CD4-positive, alpha-beta T cell (primary cell): ENCODE measurements at regions of chr7 and their contacts with region 1.

Region 1: GRCh38 chr7:130896898-130897514 is 163.0 kb upstream of the KLF14 start:
- DNase-seq: peak; percentile 51 to 91 (median 68)
- ATAC-seq: peak; percentile 81
- H3K4me3 ChIP-seq: no peak overlapping the region
- H3K4me3 Mint-ChIP-seq: peak overlapping the region; percentile 79
- H3K27ac ChIP-seq: no peak overlapping the region
- H3K27ac Mint-ChIP-seq: peak overlapping the region; percentile 74
- H3K4me1 ChIP-seq: peaks cover 76% of the 10 kb centered on the region
- H3K4me1 Mint-ChIP-seq: peaks cover 81% of the 10 kb centered on the region
- H3K27me3 ChIP-seq: no peaks in the 10 kb centered on the region
- H3K27me3 Mint-ChIP-seq: no peaks in the 10 kb centered on the region
- CTCF ChIP-seq: peak; percentile 77

Region 2: GRCh38 chr7:130781346-130781745 is 115.7 kb before region 1 on chr7:
- CTCF ChIA-PET with region 1: no interaction called
- POLR2A ChIA-PET with region 1: no interaction called
- intact Hi-C with region 1: no loop called
- DNase-seq: no peak
- ATAC-seq: no peak
- H3K4me3 ChIP-seq: no peak overlapping the region
- H3K4me3 Mint-ChIP-seq: no peak overlapping the region
- H3K27ac ChIP-seq: no peak overlapping the region
- H3K27ac Mint-ChIP-seq: no peak overlapping the region
- H3K4me1 ChIP-seq: no peaks in the 10 kb centered on the region
- H3K4me1 Mint-ChIP-seq: no peaks in the 10 kb centered on the region
- H3K27me3 ChIP-seq: no peaks in the 10 kb centered on the region
- H3K27me3 Mint-ChIP-seq: peaks cover 63% of the 10 kb centered on the region
- CTCF ChIP-seq: no peak

Region 3: GRCh38 chr7:130881091-130881798 is 15.8 kb before region 1 on chr7:
- CTCF ChIA-PET with region 1: interaction called, 11 read pairs
- POLR2A ChIA-PET with region 1: no interaction called
- intact Hi-C with region 1: no loop called
- DNase-seq: no peak
- ATAC-seq: no peak
- H3K4me3 ChIP-seq: no peak overlapping the region
- H3K4me3 Mint-ChIP-seq: no peak overlapping the region
- H3K27ac ChIP-seq: no peak overlapping the region
- H3K27ac Mint-ChIP-seq: peak overlapping the region; percentile 8
- H3K4me1 ChIP-seq: no peaks in the 10 kb centered on the region
- H3K4me1 Mint-ChIP-seq: peaks cover 31% of the 10 kb centered on the region
- H3K27me3 ChIP-seq: no peaks in the 10 kb centered on the region
- H3K27me3 Mint-ChIP-seq: no peaks in the 10 kb centered on the region
- CTCF ChIP-seq: no peak

Region 4: DNA sequence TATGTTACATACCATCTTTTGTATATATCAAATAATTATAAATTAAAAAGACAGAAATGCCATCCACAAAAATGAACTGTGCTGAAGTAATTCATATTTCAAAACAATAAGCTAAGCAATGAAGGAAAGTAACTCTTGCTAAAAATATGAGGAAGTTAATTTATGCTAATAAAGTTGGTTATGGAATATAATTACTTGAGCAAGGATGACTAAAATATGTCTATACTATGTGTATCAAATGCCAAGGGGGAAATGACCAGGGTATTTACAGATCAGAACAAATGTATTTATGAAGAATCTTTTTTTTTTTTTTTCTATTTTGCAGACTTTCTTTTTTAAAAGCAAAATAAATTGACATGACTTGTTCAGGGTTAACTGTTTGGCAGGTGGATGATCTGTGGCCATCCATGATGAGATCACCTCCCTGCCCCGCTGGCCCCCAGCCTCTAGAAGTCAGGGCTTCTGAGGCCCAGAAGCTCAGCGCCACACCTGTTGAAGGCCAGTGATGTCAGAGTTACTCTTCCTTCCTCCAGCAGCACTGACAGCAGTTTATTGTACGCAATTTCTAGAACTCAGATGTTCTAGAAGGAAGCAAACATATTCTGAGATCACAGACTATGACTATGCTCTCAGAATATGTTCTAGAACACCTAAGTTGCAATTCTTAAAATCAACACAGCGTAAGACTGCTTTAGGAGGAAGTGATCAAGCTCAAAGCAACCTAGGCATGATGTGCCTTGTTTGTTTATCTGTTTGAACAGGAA is 33.1 kb after region 1 on chr7:
- CTCF ChIA-PET with region 1: interaction called, 11 read pairs
- POLR2A ChIA-PET with region 1: interaction called, 3 read pairs
- intact Hi-C with region 1: no loop called
- DNase-seq: peak in 6 of 14 experiments; percentile 32 to 81 (median 59)
- ATAC-seq: peak; percentile 66
- H3K4me3 ChIP-seq: no peak overlapping the region
- H3K4me3 Mint-ChIP-seq: peak overlapping the region; percentile 67
- H3K27ac ChIP-seq: peak overlapping the region; percentile 46 to 65
- H3K27ac Mint-ChIP-seq: peak overlapping the region; percentile 80
- H3K4me1 ChIP-seq: peaks cover 70% of the 10 kb centered on the region
- H3K4me1 Mint-ChIP-seq: peaks cover 96% of the 10 kb centered on the region
- H3K27me3 ChIP-seq: no peaks in the 10 kb centered on the region
- H3K27me3 Mint-ChIP-seq: no peaks in the 10 kb centered on the region
- CTCF ChIP-seq: no peak

Region 5: DNA sequence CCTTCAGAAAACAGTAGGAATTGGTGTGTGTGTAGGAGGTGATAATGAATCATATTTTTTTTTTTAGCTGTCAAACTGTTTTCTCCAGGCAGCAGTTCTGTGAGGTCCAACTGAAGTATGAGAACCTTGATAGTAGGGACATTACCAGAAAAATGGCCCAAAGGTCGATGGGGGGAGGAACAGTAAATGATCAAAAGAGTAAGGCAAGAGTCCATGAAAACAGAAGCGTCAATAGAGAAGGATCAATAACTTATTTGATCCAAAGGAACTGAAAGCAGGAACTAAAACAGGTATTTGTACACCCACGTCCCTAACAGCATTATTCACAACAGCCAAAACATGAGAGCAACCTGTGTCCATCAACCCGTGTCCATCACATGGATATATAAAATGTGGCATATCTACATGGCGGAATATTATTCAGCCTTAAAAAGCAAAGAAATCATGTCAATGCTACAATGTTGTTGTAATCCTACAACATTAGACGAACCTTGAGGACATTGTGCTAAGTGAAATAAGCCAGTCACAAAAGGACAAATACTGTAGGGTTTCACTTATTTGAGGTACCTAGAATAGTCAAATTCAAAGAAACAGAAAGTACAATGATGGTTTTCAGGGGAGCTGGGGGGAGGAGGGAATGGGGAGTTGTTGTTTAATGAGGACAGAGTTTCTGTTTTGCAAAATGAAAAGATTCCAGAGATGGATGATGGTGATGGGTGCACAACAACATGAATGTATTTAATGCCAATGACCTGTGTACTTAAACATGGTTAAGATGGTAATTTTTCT is 51.0 kb after region 1 on chr7:
- CTCF ChIA-PET with region 1: interaction called, 10 read pairs
- POLR2A ChIA-PET with region 1: interaction called, 4 read pairs
- intact Hi-C with region 1: loop called in 1 of 2 experiments (anchors 10 kb)
- DNase-seq: peak in 3 of 14 experiments; percentile 62 to 84 (median 64)
- ATAC-seq: peak; percentile 16
- H3K4me3 ChIP-seq: peak overlapping the region; percentile 19
- H3K4me3 Mint-ChIP-seq: peak overlapping the region; percentile 74
- H3K27ac ChIP-seq: peak overlapping the region in 1 of 2 donors; percentile 68
- H3K27ac Mint-ChIP-seq: peak overlapping the region; percentile 98
- H3K4me1 ChIP-seq: peaks cover 59% of the 10 kb centered on the region
- H3K4me1 Mint-ChIP-seq: peaks cover 54% of the 10 kb centered on the region
- H3K27me3 ChIP-seq: no peaks in the 10 kb centered on the region
- H3K27me3 Mint-ChIP-seq: no peaks in the 10 kb centered on the region
- CTCF ChIP-seq: no peak

Region 6: DNA sequence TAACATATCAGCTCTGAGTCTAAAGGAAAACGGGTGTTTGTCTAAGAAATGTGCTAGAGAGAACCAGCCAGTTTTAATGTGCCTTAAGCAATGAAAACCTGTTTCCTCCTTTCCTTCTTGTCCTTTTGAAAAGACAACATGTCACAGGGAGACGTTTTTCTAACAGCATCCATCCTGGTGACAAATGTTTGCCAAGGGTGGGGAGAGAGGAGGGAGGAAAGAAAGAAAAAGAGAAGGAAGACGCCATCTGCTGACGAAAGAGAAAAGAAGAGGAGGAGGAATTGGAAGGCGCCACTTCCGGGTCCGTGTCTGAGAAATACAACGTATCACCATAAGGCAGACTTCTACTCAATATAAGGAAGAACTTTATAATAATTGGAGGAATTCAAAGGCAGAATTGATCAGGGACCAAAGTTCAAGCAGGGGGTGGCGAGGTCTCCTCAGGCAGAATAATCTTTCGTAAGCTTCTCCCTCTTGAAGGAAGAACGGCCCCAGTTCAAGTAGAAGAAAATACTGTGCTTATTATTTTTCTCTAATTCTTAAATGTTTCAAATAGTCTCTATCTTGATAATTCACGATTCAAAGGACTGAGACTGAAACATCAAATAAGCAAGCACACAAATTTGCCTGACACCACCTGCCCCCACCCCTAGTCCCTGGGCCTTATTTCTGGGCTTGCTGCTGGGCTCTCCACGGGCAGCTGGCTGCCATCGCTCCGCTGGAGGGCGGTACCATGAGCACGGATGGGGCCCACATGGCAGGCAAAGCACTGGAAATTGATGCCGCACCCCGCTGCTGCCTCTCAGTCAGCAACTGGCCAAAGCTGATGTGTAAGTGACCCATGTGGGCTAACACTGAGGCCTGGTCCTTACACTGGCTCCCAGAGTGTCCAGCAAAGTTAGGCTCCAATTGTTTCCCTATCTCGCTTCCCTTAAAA is 110.7 kb after region 1 on chr7:
- CTCF ChIA-PET with region 1: interaction called, 6 read pairs
- POLR2A ChIA-PET with region 1: interaction called, 13 read pairs
- intact Hi-C with region 1: loop called (anchors 1 kb)
- DNase-seq: peak in 11 of 14 experiments; percentile 27 to 83 (median 48)
- ATAC-seq: peak; percentile 60
- H3K4me3 ChIP-seq: no peak overlapping the region
- H3K4me3 Mint-ChIP-seq: peak overlapping the region; percentile 40
- H3K27ac ChIP-seq: peak overlapping the region; percentile 36 to 71
- H3K27ac Mint-ChIP-seq: peak overlapping the region; percentile 76
- H3K4me1 ChIP-seq: peaks cover 61% of the 10 kb centered on the region
- H3K4me1 Mint-ChIP-seq: peaks cover 93% of the 10 kb centered on the region
- H3K27me3 ChIP-seq: no peaks in the 10 kb centered on the region
- H3K27me3 Mint-ChIP-seq: no peaks in the 10 kb centered on the region
- CTCF ChIP-seq: peak; percentile 77

Region 7: GRCh38 chr7:131302876-131303707 is 406.1 kb after region 1 on chr7:
- CTCF ChIA-PET with region 1: interaction called, 3 read pairs
- POLR2A ChIA-PET with region 1: no interaction called
- intact Hi-C with region 1: loop called (anchors 5 kb)
- DNase-seq: peak in 13 of 14 experiments; percentile 12 to 64 (median 24)
- ATAC-seq: peak; percentile 65
- H3K4me3 ChIP-seq: no peak overlapping the region
- H3K4me3 Mint-ChIP-seq: no peak overlapping the region
- H3K27ac ChIP-seq: no peak overlapping the region
- H3K27ac Mint-ChIP-seq: no peak overlapping the region
- H3K4me1 ChIP-seq: no peaks in the 10 kb centered on the region
- H3K4me1 Mint-ChIP-seq: no peaks in the 10 kb centered on the region
- H3K27me3 ChIP-seq: no peaks in the 10 kb centered on the region
- H3K27me3 Mint-ChIP-seq: no peaks in the 10 kb centered on the region
- CTCF ChIP-seq: peak; percentile 70

Region 8: DNA sequence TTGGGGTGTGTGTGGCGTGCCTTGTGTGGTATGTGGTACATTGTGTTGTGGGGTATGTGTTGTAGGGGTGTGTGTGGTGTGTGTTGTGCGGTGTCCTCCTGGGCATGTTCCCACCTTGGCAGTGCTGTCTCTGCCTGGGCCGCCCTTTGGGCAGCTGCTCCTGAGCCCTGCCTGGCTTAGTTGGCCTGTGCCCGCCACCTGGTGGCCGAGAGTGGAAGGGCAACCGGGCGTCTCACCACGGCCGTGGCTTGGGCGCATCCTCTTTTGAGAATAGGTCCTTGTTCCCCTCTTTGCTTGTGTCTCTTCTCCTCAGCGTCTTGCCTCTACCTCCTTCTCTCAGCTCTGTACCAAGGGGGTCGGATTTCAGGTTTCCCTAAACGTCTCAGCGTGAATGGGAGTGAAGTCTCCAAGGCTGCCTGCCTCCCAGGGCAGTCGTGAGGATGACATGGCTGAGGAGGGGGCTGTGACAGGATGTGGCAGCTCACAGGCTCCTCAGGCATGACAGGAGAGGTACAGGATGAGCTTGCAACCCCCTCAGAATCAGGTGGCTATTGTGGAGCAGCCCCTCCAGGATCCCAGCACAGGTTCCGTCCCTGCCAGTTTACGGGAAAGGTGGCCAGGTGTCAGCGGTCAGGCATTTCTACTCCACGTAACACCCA is 757.8 kb after region 1 on chr7:
- CTCF ChIA-PET with region 1: no interaction called
- POLR2A ChIA-PET with region 1: no interaction called
- intact Hi-C with region 1: loop called in 1 of 2 experiments (anchors 10 kb)
- DNase-seq: peak; percentile 59 to 85 (median 76)
- ATAC-seq: peak; percentile 80
- H3K4me3 ChIP-seq: no peak overlapping the region
- H3K4me3 Mint-ChIP-seq: no peak overlapping the region
- H3K27ac ChIP-seq: no peak overlapping the region
- H3K27ac Mint-ChIP-seq: no peak overlapping the region
- H3K4me1 ChIP-seq: peaks cover 3% of the 10 kb centered on the region
- H3K4me1 Mint-ChIP-seq: no peaks in the 10 kb centered on the region
- H3K27me3 ChIP-seq: no peaks in the 10 kb centered on the region
- H3K27me3 Mint-ChIP-seq: peaks cover 7% of the 10 kb centered on the region
- CTCF ChIP-seq: peak; percentile 83

Region 9: GRCh38 chr7:132191418-132191817 is 1294.4 kb after region 1 on chr7:
- CTCF ChIA-PET with region 1: no interaction called
- POLR2A ChIA-PET with region 1: no interaction called
- intact Hi-C with region 1: no loop called
- DNase-seq: no peak
- ATAC-seq: no peak
- H3K4me3 ChIP-seq: no peak overlapping the region
- H3K4me3 Mint-ChIP-seq: no peak overlapping the region
- H3K27ac ChIP-seq: no peak overlapping the region
- H3K27ac Mint-ChIP-seq: no peak overlapping the region
- H3K4me1 ChIP-seq: no peaks in the 10 kb centered on the region
- H3K4me1 Mint-ChIP-seq: no peaks in the 10 kb centered on the region
- H3K27me3 ChIP-seq: no peaks in the 10 kb centered on the region
- H3K27me3 Mint-ChIP-seq: peaks cover 4% of the 10 kb centered on the region
- CTCF ChIP-seq: no peak